GM12878 (cell line): ENCODE measurements at regions of chr19 and their contacts with region 1.

Region 1: GRCh38 chr19:12965017-12965811 is 4.2 kb upstream of the DAND5 start:
- DNase-seq: peak; percentile 39
- ATAC-seq: peak; percentile 99
- H3K4me3 ChIP-seq: peak overlapping the region; percentile 64; the same call in 1 of the 2 replicates
- H3K27ac ChIP-seq: peak overlapping the region; percentile 2; the same call in 1 of the 2 replicates
- H3K4me1 ChIP-seq: 0 out of 2 replicates have a peak, but pooled peaks cover 3% of the 10 kb centered on the region
- H3K27me3 ChIP-seq: no peaks in the 10 kb centered on the region
- CTCF ChIP-seq: peak; percentile 81 to 99 (median 97)
- EP300 ChIP-seq: no peak
- POLR2A ChIP-seq: peak; percentile 29; the same call in 1 of the 2 replicates
- RAD21 ChIP-seq: peak; percentile 68

Region 2: GRCh38 chr19:12789904-12790619 is 175.2 kb before region 1 on chr19:
- CTCF ChIA-PET with region 1: no interaction called
- POLR2A ChIA-PET with region 1: no interaction called
- RAD21 ChIA-PET with region 1: no interaction called
- SMC1A ChIA-PET with region 1: no interaction called
- in situ Hi-C with region 1: no loop called
- intact Hi-C with region 1: no loop called
- DNase-seq: peak; percentile 86
- ATAC-seq: peak; percentile 53
- H3K4me3 ChIP-seq: peak overlapping the region; percentile 87
- H3K27ac ChIP-seq: peak overlapping the region; percentile 99
- H3K4me1 ChIP-seq: peaks cover 47% of the 10 kb centered on the region
- H3K27me3 ChIP-seq: no peaks in the 10 kb centered on the region
- CTCF ChIP-seq: no peak
- EP300 ChIP-seq: 0 out of 4 replicates have a peak, but pooled peaks of 1 of the 2 experiments have one; percentile 9
- POLR2A ChIP-seq: no peak
- RAD21 ChIP-seq: no peak

Region 3: GRCh38 chr19:12899891-12900518 is 65.2 kb before region 1 on chr19:
- CTCF ChIA-PET with region 1: interaction called, 41 read pairs
- POLR2A ChIA-PET with region 1: interaction called, 3 read pairs
- RAD21 ChIA-PET with region 1: interaction called, 17 read pairs
- SMC1A ChIA-PET with region 1: interaction called, 11 read pairs
- in situ Hi-C with region 1: no loop called
- intact Hi-C with region 1: no loop called
- DNase-seq: peak; percentile 61
- ATAC-seq: peak; percentile 97
- H3K4me3 ChIP-seq: peak overlapping the region; percentile 9; the same call in 1 of the 2 replicates
- H3K27ac ChIP-seq: peak overlapping the region; percentile 4; the same call in 1 of the 2 replicates
- H3K4me1 ChIP-seq: peaks cover 15% of the 10 kb centered on the region
- H3K27me3 ChIP-seq: no peaks in the 10 kb centered on the region
- CTCF ChIP-seq: peak in 2 of 3 experiments; percentile 1 to 18; a peak in 1 of 6 replicates
- EP300 ChIP-seq: peak; percentile 76 to 89; a peak in 3 of 4 replicates
- POLR2A ChIP-seq: no peak
- RAD21 ChIP-seq: no peak

Region 4: DNA sequence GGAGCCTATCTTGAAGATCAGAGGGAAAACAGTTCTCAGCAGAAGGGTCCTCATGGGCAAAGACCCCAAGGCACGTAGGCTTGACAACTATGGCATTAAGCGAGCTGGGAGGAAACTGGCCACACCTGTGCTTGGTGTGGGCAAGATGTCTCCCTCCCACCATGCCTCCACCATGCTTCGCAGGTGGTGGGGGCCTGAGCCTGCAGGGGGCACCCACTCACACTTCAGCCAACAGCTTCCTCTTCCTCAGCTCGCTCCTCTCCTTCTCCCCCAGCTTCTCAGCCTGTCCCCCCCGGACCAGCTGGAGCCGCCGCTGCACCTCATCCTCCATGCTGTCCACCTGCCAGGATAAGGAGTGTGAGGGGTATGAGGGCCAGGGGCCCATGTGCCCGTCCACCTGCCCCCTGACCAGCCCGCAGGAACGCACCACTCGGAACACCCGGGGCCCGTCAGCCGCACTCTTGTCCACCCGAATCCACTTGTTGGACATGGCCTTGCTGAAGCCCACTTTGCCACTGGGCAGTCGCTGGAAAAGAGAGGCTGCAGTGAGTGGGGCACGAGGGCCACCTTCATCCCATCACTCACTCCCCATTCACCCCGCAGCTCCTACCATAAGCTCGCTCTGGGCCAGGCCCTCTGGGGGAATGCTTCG is 35.1 kb before region 1 on chr19:
- CTCF ChIA-PET with region 1: interaction called, 18 read pairs
- POLR2A ChIA-PET with region 1: no interaction called
- RAD21 ChIA-PET with region 1: interaction called, 5 read pairs
- SMC1A ChIA-PET with region 1: interaction called, 8 read pairs
- in situ Hi-C with region 1: no loop called
- intact Hi-C with region 1: no loop called
- DNase-seq: no peak
- ATAC-seq: no peak
- H3K4me3 ChIP-seq: no peak overlapping the region
- H3K27ac ChIP-seq: no peak overlapping the region
- H3K4me1 ChIP-seq: no peaks in the 10 kb centered on the region
- H3K27me3 ChIP-seq: no peaks in the 10 kb centered on the region
- CTCF ChIP-seq: no peak
- EP300 ChIP-seq: no peak
- POLR2A ChIP-seq: no peak
- RAD21 ChIP-seq: no peak

Region 5: DNA sequence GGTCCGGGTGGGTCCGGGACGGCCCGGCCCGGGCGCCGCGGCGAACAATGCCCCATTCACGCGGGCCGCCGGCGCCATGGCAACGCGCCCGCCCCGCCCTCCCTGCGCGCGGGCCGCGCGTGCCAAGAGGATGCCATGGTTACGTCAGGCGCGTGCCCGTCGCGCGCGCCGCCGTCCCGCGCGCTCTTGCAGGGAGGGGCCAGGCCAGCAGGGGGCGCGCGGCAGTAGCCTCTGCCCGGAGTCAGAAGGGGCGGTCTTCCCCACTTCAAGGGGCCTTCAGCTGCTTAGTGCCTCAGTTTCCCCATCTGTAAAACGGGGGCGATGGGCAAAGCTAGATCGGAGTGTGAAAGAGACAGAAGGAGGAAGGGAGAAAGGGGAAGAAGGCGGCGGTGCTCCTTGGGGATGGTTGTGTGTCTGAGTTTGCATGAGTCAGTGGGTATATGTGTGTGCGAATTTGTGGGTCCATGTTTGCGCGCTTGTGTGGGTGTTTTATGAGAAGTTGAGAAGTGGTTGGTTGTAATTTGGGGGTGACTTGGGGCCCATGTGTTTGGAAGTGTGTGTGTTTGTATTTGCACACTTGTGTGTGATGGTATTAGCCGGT is 18.4 kb after region 1 on chr19:
- CTCF ChIA-PET with region 1: interaction called, 59 read pairs
- POLR2A ChIA-PET with region 1: no interaction called
- RAD21 ChIA-PET with region 1: interaction called, 5 read pairs
- SMC1A ChIA-PET with region 1: interaction called, 25 read pairs
- in situ Hi-C with region 1: no loop called
- intact Hi-C with region 1: no loop called
- DNase-seq: no peak
- ATAC-seq: peak; percentile 71
- H3K4me3 ChIP-seq: 0 out of 2 replicates have a peak overlapping the region, but pooled peaks have one; percentile 16
- H3K27ac ChIP-seq: no peak overlapping the region
- H3K4me1 ChIP-seq: no peaks in the 10 kb centered on the region; the same call in 1 of the 2 replicates
- H3K27me3 ChIP-seq: peaks cover 0 to 3% of the 10 kb centered on the region in 2 experiments; a peak in 1 of 4 replicates
- CTCF ChIP-seq: peak; percentile 75 to 90 (median 81)
- EP300 ChIP-seq: no peak
- POLR2A ChIP-seq: no peak
- RAD21 ChIP-seq: peak; percentile 62

Region 6: DNA sequence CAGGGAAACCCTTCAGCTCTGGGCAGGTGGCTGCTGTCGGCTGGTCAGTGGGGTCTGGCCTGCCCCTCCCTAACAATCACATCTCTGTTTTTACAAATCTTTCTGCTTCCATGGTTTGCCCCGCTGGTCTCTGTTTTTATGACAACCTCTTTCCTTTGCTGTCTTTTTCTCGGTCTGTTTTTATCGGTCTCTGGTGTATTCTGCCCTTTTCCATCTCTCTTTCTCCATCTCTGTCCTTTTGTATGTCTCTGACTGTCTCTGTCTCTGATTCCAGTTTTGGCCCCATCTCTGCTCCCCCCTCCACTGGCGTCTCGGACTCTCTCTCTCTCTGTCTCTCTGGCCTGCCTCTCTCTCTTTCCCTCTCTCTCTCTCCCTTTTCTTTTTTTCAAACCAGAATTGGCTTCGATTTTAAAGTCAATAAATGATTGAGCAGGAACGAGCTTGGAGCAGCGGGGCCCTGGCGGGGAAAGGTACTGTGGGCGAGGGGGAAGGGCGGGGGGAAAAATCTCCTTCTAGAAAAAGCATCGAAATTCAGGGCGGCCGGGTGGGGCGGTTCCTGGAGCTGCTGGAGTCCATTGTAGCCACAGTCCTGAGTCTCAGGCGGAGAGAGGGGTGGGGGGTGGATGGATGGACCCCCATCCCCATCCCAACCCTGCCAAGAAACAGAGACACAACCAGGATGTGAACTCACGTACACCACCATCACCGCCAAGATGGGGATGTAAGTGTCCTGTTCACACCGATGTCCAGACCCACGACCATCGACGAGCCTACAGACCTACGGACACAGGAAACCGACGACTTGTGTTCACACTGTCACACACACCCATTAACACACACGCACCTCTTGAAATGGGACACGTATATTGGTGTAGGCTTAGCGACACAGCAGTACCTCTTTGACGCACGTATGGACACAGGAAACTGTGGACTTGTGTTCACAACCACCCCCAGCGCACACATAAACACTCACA is 33.0 kb after region 1 on chr19:
- CTCF ChIA-PET with region 1: no interaction called
- POLR2A ChIA-PET with region 1: no interaction called
- RAD21 ChIA-PET with region 1: no interaction called
- SMC1A ChIA-PET with region 1: no interaction called
- in situ Hi-C with region 1: no loop called
- intact Hi-C with region 1: no loop called
- DNase-seq: no peak
- ATAC-seq: no peak
- H3K4me3 ChIP-seq: no peak overlapping the region
- H3K27ac ChIP-seq: no peak overlapping the region
- H3K4me1 ChIP-seq: no peaks in the 10 kb centered on the region
- H3K27me3 ChIP-seq: peaks cover 4 to 6% of the 10 kb centered on the region in 2 experiments; a peak in 3 of 4 replicates
- CTCF ChIP-seq: no peak
- EP300 ChIP-seq: no peak
- POLR2A ChIP-seq: no peak
- RAD21 ChIP-seq: no peak

Region 7: GRCh38 chr19:13093407-13094105 is 128.3 kb after region 1 on chr19:
- CTCF ChIA-PET with region 1: interaction called, 63 read pairs
- POLR2A ChIA-PET with region 1: no interaction called
- RAD21 ChIA-PET with region 1: interaction called, 18 read pairs
- SMC1A ChIA-PET with region 1: interaction called, 20 read pairs
- in situ Hi-C with region 1: no loop called
- intact Hi-C with region 1: no loop called
- DNase-seq: no peak
- ATAC-seq: peak; percentile 89
- H3K4me3 ChIP-seq: no peak overlapping the region
- H3K27ac ChIP-seq: no peak overlapping the region
- H3K4me1 ChIP-seq: peaks cover 17% of the 10 kb centered on the region
- H3K27me3 ChIP-seq: peaks cover 2 to 7% of the 10 kb centered on the region in 2 experiments; a peak in 3 of 4 replicates
- CTCF ChIP-seq: peak; percentile 89 to 95 (median 92)
- EP300 ChIP-seq: no peak
- POLR2A ChIP-seq: no peak
- RAD21 ChIP-seq: peak; percentile 95

Region 8: GRCh38 chr19:13621413-13621812 is 656.2 kb after region 1 on chr19:
- CTCF ChIA-PET with region 1: no interaction called
- POLR2A ChIA-PET with region 1: no interaction called
- RAD21 ChIA-PET with region 1: no interaction called
- SMC1A ChIA-PET with region 1: no interaction called
- in situ Hi-C with region 1: no loop called
- intact Hi-C with region 1: no loop called
- DNase-seq: no peak
- ATAC-seq: peak; percentile 35; the same call in 2 of the 3 replicates
- H3K4me3 ChIP-seq: no peak overlapping the region
- H3K27ac ChIP-seq: no peak overlapping the region
- H3K4me1 ChIP-seq: no peaks in the 10 kb centered on the region
- H3K27me3 ChIP-seq: peaks cover 2 to 3% of the 10 kb centered on the region in 2 experiments
- CTCF ChIP-seq: peak in 1 of 3 experiments; percentile 22; a peak in 1 of 6 replicates
- EP300 ChIP-seq: no peak
- POLR2A ChIP-seq: no peak
- RAD21 ChIP-seq: no peak